Activated CD4-positive, alpha-beta memory T cell treated with anti-CD3 and anti-CD28 coated beads for 36 hours (primary cell): ENCODE measurements at regions of chr15 and their contacts with region 1.

Region 1: GRCh38 chr15:80152180-80152845 is 486 bp upstream of the FAH start:
- DNase-seq: peak; percentile 98
- H3K4me3 Mint-ChIP-seq: peak overlapping the region; percentile 74
- H3K27ac Mint-ChIP-seq: peak overlapping the region; percentile 50
- H3K4me1 Mint-ChIP-seq: peaks cover 23% of the 10 kb centered on the region
- H3K27me3 Mint-ChIP-seq: no peaks in the 10 kb centered on the region

Region 2: GRCh38 chr15:79853458-79854328 is 298.6 kb before region 1 on chr15:
- CTCF ChIA-PET with region 1: interaction called, 3 read pairs
- POLR2A ChIA-PET with region 1: no interaction called
- intact Hi-C with region 1: loop called (anchors 10 kb)
- DNase-seq: peak; percentile 83
- H3K4me3 Mint-ChIP-seq: no peak overlapping the region
- H3K27ac Mint-ChIP-seq: no peak overlapping the region
- H3K4me1 Mint-ChIP-seq: peaks cover 15% of the 10 kb centered on the region
- H3K27me3 Mint-ChIP-seq: no peaks in the 10 kb centered on the region

Region 3: GRCh38 chr15:79872358-79873017 is 279.8 kb before region 1 on chr15:
- CTCF ChIA-PET with region 1: no interaction called
- POLR2A ChIA-PET with region 1: no interaction called
- intact Hi-C with region 1: no loop called
- DNase-seq: peak; percentile 62
- H3K4me3 Mint-ChIP-seq: no peak overlapping the region
- H3K27ac Mint-ChIP-seq: no peak overlapping the region
- H3K4me1 Mint-ChIP-seq: peaks cover 23% of the 10 kb centered on the region
- H3K27me3 Mint-ChIP-seq: no peaks in the 10 kb centered on the region

Region 4: GRCh38 chr15:79896637-79897379 is 255.5 kb before region 1 on chr15 and contains the start of gene MTHFS:
- CTCF ChIA-PET with region 1: no interaction called
- POLR2A ChIA-PET with region 1: no interaction called
- intact Hi-C with region 1: loop called (anchors 1 kb)
- DNase-seq: peak; percentile 83
- H3K4me3 Mint-ChIP-seq: peak within 1 kb of the TSS; percentile 97
- H3K27ac Mint-ChIP-seq: peak within 1 kb of the TSS; percentile 99
- H3K4me1 Mint-ChIP-seq: peaks cover 45% of the 10 kb centered on the region
- H3K27me3 Mint-ChIP-seq: no peaks in the 10 kb centered on the region
- total RNA-seq, gene MTHFS: 46.2 to 49.4 TPM

Region 5: GRCh38 chr15:79923515-79924395 is 228.6 kb before region 1 on chr15:
- CTCF ChIA-PET with region 1: no interaction called
- POLR2A ChIA-PET with region 1: no interaction called
- intact Hi-C with region 1: loop called (anchors 2 kb)
- DNase-seq: peak; percentile 99
- H3K4me3 Mint-ChIP-seq: peak overlapping the region; percentile 93
- H3K27ac Mint-ChIP-seq: peak overlapping the region; percentile 95
- H3K4me1 Mint-ChIP-seq: peaks cover 20% of the 10 kb centered on the region
- H3K27me3 Mint-ChIP-seq: no peaks in the 10 kb centered on the region

Region 6: DNA sequence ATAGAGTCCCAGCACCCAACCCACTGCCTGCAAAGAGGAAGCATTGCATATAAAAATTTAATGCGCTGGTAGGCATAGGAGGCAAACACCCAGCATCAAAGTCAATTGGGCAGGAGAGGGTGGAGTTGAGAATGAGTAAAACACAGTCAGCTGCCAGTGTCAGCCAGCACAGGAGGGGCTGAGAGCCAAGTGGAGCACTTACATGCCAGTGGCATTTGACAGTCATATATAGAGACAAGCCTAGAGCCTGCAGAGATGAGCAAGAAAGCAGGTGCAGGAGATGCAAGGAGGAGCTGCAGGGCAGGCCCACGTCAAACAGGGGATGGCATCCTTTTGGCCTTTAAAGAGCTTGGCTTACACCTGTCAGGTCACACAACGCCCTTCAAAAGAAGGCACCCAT is 120.5 kb before region 1 on chr15:
- CTCF ChIA-PET with region 1: no interaction called
- POLR2A ChIA-PET with region 1: no interaction called
- intact Hi-C with region 1: loop called (anchors 1 kb)
- DNase-seq: peak; percentile 69
- H3K4me3 Mint-ChIP-seq: no peak overlapping the region
- H3K27ac Mint-ChIP-seq: peak overlapping the region; percentile 76
- H3K4me1 Mint-ChIP-seq: peaks cover 26% of the 10 kb centered on the region
- H3K27me3 Mint-ChIP-seq: no peaks in the 10 kb centered on the region

Region 7: DNA sequence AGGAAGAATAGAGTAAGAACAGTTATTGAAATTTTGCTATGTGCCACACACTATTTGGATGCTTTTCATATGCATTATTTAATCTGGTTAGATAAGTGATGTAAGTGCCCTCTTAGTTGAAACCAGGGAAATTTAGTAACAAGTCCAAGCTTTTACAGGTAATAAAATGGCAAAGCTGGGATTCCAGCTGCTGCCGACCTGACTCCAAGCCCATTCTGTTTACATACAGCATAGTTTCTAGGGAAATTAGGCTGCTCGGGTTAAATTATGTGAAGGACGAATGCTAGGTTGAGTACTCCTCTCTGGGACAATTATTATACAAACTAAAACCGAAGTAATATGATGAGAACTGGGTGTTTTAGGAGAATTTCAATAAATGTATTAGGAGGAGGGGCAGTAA is 38.2 kb before region 1 on chr15:
- CTCF ChIA-PET with region 1: no interaction called
- POLR2A ChIA-PET with region 1: no interaction called
- intact Hi-C with region 1: loop called (anchors 5 kb)
- DNase-seq: no peak
- H3K4me3 Mint-ChIP-seq: no peak overlapping the region
- H3K27ac Mint-ChIP-seq: no peak overlapping the region
- H3K4me1 Mint-ChIP-seq: peaks cover 19% of the 10 kb centered on the region
- H3K27me3 Mint-ChIP-seq: no peaks in the 10 kb centered on the region

Region 8: GRCh38 chr15:80141916-80142598 is 10.3 kb before region 1 on chr15:
- CTCF ChIA-PET with region 1: no interaction called
- POLR2A ChIA-PET with region 1: no interaction called
- intact Hi-C with region 1: no loop called
- DNase-seq: no peak
- H3K4me3 Mint-ChIP-seq: no peak overlapping the region
- H3K27ac Mint-ChIP-seq: no peak overlapping the region
- H3K4me1 Mint-ChIP-seq: no peaks in the 10 kb centered on the region
- H3K27me3 Mint-ChIP-seq: no peaks in the 10 kb centered on the region